Activated CD4-positive, alpha-beta T cell treated with anti-CD3 and anti-CD28 coated beads, Interleukin-2, amount 10 ng/mL, durations not matched to agents 24 days and 14 days (primary cell): ENCODE measurements at regions of chr6 and their contacts with region 1.

Region 1: DNA sequence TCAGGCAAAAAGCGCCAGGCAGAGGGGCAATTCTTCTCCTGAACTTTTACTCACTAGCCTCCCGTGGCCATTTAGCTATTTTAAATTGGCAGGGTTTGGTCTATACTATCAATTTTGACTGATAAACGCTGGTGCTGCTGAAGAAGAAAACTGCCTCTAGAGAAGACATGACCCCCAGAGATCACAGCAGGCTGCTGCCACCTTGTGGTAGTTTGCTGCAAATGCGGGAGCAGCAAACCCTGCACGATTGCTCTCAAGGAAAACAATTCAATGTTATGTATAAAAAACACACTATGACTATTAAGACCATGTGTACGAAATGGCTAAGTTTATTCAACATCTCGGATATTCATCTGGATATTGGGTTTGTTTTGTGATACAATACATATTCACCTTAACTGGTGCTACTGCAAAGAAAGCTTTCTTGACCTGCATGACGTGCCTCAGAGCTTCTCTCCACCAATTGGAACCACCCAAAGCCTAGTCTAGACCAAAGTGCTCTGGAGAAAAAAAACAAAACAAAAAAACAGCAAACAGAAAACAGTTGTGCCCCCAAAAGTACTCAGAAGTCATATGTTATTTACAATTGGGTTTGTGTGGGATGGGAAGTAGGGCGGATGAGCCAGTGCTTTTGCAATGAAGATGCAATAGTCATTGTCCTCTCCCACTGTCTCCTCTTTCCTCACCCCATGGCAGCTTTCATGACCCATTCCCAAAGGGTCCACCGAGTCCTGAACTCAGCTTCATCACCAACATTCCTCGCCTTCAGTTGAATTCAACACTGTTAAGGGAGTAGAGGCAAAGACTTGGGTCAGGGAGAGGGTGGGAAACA is 19.6 kb upstream of the IL17F start:
- DNase-seq: peak; percentile 92
- H3K4me3 Mint-ChIP-seq: no peak overlapping the region
- H3K27ac Mint-ChIP-seq: peak overlapping the region; percentile 16
- H3K4me1 Mint-ChIP-seq: peaks cover 8% of the 10 kb centered on the region
- H3K27me3 Mint-ChIP-seq: no peaks in the 10 kb centered on the region

Region 2: DNA sequence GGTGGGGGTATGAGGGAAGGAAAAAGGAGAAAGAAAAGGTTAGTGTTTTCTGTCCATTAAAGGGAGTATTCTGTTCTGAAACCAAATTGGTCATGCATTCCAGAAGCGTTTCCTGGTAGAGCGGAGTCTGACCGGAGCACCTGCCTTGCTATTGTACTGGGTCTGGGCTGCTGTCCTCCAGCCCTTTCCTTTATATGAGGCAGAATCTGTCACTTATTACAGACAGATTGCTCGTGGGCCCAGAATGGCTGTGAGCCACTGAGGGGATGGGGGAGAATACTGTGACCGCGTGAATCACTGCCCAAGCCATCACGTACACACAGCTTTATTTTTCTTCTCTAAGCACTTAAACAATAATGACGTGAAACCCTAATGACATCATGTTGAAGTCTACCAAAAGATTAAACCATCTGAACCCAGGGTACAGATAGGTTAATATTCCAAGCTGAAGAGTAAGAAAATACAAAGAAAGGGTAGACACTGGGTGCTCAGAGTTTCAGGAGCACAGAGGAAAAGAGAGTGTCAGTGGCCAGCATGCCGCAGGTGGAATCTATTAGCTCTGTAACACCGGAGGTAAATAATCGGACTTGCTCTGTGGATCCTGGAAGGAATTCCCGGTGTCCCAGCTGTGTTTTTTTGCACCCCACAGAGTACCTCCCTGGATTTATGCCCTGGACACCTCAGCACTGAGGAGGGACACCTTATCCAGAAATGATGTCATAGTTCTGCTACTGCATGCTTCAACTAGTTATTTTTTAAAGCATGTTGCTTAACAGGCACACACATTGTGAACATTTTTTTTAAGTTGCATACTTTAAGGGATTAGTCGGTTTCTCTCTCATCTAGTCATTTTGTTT is 749.8 kb before region 1 on chr6:
- intact Hi-C with region 1: no loop called
- DNase-seq: no peak
- H3K4me3 Mint-ChIP-seq: no peak overlapping the region
- H3K27ac Mint-ChIP-seq: no peak overlapping the region
- H3K4me1 Mint-ChIP-seq: no peaks in the 10 kb centered on the region
- H3K27me3 Mint-ChIP-seq: no peaks in the 10 kb centered on the region

Region 3: DNA sequence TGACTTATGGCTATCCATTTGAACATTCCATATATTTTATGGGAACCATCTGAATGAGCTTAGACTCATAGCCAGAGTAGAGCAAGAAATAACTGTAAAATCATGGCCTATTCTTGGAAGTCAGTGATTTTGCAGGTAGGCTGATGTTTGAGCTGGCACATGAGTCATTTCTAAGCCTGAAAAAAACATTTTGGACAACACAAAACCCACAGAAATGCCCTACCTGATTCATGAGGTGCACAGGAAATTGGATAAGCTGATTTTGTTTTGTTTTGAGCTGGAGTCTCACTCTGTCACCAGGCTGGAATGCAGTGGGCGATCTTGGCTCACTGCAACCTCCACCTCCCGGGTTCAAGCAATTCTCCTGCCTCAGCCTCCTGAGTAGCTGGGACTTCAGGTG is 619.5 kb before region 1 on chr6:
- intact Hi-C with region 1: no loop called
- DNase-seq: no peak
- H3K4me3 Mint-ChIP-seq: no peak overlapping the region
- H3K27ac Mint-ChIP-seq: no peak overlapping the region
- H3K4me1 Mint-ChIP-seq: no peaks in the 10 kb centered on the region
- H3K27me3 Mint-ChIP-seq: no peaks in the 10 kb centered on the region

Region 4: GRCh38 chr6:51855310-51856082 is 408.4 kb before region 1 on chr6:
- intact Hi-C with region 1: loop called (anchors 10 kb)
- DNase-seq: peak; percentile 77
- H3K4me3 Mint-ChIP-seq: no peak overlapping the region
- H3K27ac Mint-ChIP-seq: no peak overlapping the region
- H3K4me1 Mint-ChIP-seq: no peaks in the 10 kb centered on the region
- H3K27me3 Mint-ChIP-seq: no peaks in the 10 kb centered on the region

Region 5: DNA sequence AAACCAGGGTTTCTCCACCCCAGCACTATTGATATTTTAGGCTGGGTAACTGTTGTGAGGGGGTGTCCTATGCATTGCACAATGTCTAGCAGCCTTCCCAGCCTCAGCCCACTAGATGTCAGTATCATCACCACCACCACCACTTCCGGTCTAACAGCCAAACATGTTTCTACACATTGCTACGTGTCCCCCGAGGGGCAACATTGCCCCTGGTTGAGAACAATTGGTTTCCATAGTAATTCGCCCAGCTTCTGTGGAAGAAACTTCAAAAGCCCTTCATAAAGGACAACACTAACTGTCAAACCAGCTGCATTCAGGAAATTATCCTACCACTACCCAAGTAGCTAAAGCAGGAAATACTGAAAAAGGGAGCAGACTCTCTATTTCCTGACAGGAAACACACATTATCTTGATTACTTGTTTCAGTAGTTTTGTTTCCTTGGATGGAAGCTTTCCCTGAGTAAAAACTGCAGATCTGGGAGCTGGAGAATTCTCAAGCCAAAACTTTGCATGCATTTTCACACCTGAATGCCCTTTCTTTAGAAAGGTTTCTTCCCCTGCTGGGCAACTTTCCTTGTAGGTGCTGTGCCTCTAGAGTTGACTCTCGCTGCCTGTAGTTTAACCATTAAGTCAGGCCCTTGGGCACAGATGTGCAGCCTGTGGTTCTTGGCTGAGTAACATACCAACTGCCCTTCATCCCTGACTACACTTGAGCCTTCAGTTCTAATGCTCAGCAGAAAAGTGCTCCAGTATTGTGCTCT is 200.2 kb before region 1 on chr6:
- intact Hi-C with region 1: loop called (anchors 1 kb)
- DNase-seq: peak; percentile 86
- H3K4me3 Mint-ChIP-seq: peak overlapping the region; percentile 53
- H3K27ac Mint-ChIP-seq: peak overlapping the region; percentile 72
- H3K4me1 Mint-ChIP-seq: peaks cover 7% of the 10 kb centered on the region
- H3K27me3 Mint-ChIP-seq: peaks cover 13% of the 10 kb centered on the region

Region 6: DNA sequence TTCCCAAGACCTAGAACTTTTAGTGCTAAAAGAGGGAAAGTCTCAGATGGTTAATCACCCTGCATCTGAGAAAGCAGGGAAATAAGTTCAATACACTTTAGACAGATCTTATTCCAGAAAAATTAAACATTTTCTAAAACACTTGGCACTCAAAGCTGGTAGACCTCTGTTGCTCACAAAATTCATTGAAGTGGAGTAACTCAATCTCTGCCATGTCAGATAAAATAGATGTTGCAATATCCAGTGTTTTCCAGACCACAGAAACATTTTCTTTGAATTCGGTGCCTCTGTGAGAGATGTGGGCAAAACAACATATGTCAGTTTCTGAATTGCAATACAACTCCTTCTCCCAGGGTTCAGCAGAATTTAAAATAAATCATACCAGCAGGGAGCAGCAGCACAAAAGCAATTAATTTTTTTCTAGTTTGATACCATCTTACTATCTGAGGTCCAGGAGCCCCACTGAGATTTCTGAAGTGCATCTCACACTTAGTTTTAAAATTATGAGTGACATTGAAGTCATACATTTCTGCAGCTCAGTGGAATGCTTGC is 165.2 kb before region 1 on chr6:
- intact Hi-C with region 1: loop called (anchors 1 kb)
- DNase-seq: no peak
- H3K4me3 Mint-ChIP-seq: no peak overlapping the region
- H3K27ac Mint-ChIP-seq: no peak overlapping the region
- H3K4me1 Mint-ChIP-seq: no peaks in the 10 kb centered on the region
- H3K27me3 Mint-ChIP-seq: peaks cover 19% of the 10 kb centered on the region

Region 7: GRCh38 chr6:52213127-52213526 is 50.8 kb before region 1 on chr6:
- intact Hi-C with region 1: loop called (anchors 1 kb)
- DNase-seq: peak; percentile 65
- H3K4me3 Mint-ChIP-seq: no peak overlapping the region
- H3K27ac Mint-ChIP-seq: no peak overlapping the region
- H3K4me1 Mint-ChIP-seq: peaks cover 7% of the 10 kb centered on the region
- H3K27me3 Mint-ChIP-seq: peaks cover 34% of the 10 kb centered on the region